Calu3 (cell line): ENCODE measurements at regions of chr10 and their contacts with region 1.

Region 1: GRCh38 chr10:114638821-114639625 is 19.1 kb downstream of the ABLIM1 start:
- DNase-seq: no peak
- H3K4me3 Mint-ChIP-seq: no peak overlapping the region
- H3K27ac Mint-ChIP-seq: peak overlapping the region; percentile 81
- H3K4me1 Mint-ChIP-seq: peaks cover 36% of the 10 kb centered on the region
- H3K27me3 Mint-ChIP-seq: no peaks in the 10 kb centered on the region
- CTCF ChIP-seq: no peak

Region 2: GRCh38 chr10:113603057-113603768 is 1035.8 kb before region 1 on chr10:
- CTCF ChIA-PET with region 1: interaction called, 10 read pairs
- intact Hi-C with region 1: no loop called
- DNase-seq: no peak
- H3K4me3 Mint-ChIP-seq: no peak overlapping the region
- H3K27ac Mint-ChIP-seq: no peak overlapping the region
- H3K4me1 Mint-ChIP-seq: no peaks in the 10 kb centered on the region
- H3K27me3 Mint-ChIP-seq: peaks cover 50% of the 10 kb centered on the region
- CTCF ChIP-seq: no peak